HAP-1 (cell line): ENCODE measurements at regions of chr17 and their contacts with region 1.

Region 1: DNA sequence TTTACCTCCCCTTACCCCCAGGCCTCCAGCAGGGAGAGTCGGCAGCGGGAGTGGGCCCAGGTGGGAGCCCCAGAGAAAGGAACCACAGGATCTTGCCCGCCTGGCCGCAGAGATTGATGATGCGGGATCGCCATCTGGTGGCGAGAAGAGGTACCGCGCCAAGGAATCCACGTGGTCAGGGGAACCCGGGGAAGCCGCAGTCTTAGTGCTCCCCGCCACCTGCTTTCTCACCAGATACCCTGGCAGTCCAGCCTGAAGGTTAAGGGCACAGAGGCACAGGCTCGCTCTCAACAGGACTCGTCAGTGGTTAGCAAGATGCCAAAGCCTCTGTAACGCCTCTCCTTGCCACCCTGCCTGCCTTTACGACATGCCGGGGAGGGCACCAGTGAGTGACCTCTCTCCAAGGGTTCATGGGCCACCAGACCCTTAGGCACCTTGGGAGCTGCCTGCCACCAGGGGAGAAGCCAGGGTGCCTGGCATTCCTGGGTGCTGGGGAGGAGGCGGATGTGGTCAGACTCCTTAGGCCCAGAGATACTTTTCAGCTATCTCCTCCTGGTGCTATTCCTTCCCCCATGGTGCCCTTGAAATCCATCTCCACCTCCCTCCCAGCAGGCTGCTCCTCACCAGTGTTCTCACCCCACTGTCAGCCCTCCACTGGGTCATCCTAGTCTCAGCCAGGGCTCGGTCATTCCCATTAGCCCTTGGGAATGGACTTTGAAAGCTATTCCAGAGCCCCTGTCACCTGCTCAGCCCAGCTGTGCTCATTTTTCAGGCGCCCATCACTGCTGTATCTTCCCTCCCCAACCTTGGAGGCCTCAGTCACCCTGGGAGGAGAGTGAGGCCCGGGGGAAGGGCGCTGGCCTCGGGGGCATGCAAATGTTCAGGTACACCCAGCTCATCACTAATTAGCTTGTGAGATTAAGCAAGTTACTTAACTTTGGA is 5.5 kb upstream of the RHBDF2 start:
- DNase-seq: peak; percentile 68 to 90
- H3K4me3 ChIP-seq: no peak overlapping the region
- H3K4me1 ChIP-seq: peaks cover 1% of the 10 kb centered on the region
- H3K27me3 ChIP-seq: no peaks in the 10 kb centered on the region

Region 2: DNA sequence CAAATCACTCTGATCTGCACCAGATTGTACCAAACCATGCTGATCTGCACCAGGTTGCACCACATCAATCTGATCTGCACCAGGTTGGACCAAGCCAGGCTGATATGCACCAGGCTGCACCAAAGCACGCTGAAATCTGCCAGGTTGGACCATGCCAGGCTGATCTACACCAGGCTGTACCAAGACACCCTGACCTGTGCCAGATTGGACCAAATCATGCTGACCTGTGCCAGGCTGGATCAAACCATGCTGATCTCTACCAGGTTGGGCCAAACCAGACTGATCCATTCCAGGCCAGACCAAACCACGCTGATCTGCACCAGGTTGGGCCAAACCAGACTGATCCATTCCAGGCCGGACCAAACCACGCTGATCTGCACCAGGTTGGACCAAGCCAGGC is 214.1 kb before region 1 on chr17:
- in situ Hi-C with region 1: loop called (anchors 5 kb)
- DNase-seq: no peak
- H3K4me3 ChIP-seq: no peak overlapping the region
- H3K4me1 ChIP-seq: no peaks in the 10 kb centered on the region
- H3K27me3 ChIP-seq: no peaks in the 10 kb centered on the region

Region 3: DNA sequence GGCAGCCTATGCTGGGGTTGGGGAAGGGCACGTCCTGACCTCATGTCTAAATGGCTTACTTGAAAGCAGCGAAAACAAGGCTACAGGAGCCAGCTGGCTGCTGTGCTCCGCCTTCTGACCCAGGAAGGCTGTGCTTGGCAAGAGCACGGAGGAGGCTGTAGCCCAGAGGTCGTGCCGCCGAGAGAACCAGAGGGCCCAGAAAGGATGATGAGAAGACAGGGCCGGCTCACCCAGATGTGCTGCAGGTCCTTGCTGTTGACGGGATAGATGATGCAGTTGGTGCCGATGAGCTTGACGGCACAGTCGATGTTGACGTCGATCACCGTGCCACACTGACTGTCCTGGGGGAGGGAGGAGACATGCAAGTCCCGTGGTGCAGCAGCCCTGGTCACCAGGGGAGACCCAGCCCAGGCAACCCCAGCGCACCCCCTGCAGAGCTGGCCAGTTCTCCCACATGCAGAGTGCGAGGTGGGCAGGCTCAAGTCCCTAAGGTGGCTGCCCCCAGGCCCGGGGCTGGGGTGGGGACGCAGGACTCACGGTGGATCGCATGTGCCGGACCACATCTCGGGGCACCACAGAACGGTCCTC is 101.6 kb before region 1 on chr17:
- in situ Hi-C with region 1: loop called (anchors 5 kb)
- DNase-seq: no peak
- H3K4me3 ChIP-seq: no peak overlapping the region
- H3K4me1 ChIP-seq: no peaks in the 10 kb centered on the region
- H3K27me3 ChIP-seq: no peaks in the 10 kb centered on the region

Region 4: DNA sequence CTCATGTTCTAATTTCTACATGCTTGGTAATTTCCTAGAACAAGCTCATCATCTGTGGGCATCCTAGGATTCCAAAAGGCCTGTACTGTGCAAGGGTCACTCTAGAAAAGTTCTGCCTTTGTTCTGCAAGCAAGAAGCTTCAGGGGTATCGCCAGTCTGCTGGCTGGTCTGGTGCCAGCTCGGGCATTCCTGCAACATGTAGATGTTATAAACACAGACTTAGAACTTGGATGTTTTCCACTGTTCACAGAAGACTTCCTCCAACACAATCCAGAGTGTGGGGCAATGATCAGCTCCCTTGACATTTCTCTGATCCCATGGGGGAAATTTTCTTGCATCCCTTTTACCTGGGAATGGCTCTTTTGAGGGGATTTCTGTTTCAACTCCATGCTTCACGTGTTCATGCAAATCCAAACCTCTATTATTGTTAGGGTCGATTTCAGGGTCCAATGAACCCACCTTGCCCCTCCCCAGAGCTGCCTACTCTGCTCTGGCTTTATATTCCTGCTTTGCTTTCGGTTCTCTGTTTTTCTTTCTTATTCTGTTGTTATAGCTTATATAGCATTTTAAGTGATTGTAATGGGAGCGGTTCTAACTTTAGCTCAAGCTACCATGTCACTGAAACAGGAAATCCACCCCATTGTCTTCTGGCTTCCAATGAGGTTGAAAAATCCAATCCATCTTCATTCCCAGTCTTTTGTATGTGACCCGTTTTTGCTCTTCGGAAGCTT is 79.0 kb before region 1 on chr17:
- in situ Hi-C with region 1: no loop called
- DNase-seq: peak in 1 of 2 experiments; percentile 1
- H3K4me3 ChIP-seq: no peak overlapping the region
- H3K4me1 ChIP-seq: peaks cover 17% of the 10 kb centered on the region
- H3K27me3 ChIP-seq: no peaks in the 10 kb centered on the region

Region 5: GRCh38 chr17:76467366-76467765 is 39.3 kb before region 1 on chr17 and contains the start of gene AANAT:
- in situ Hi-C with region 1: loop called (anchors 5 kb)
- DNase-seq: no peak
- H3K4me3 ChIP-seq: no peak within 1 kb of the TSS
- H3K4me1 ChIP-seq: no peaks in the 10 kb centered on the region
- H3K27me3 ChIP-seq: no peaks in the 10 kb centered on the region

Region 6: GRCh38 chr17:76737082-76737675 is 230.5 kb after region 1 on chr17 and contains the start of gene SRSF2:
- in situ Hi-C with region 1: no loop called
- DNase-seq: peak; percentile 97 to 98
- H3K4me3 ChIP-seq: peak within 1 kb of the TSS; percentile 100
- H3K4me1 ChIP-seq: peaks cover 30% of the 10 kb centered on the region
- H3K27me3 ChIP-seq: no peaks in the 10 kb centered on the region